Panc1 (cell line): ENCODE measurements at regions of chr5 and their contacts with region 1.

Region 1: GRCh38 chr5:109805883-109806282 is 116.2 kb downstream of the MAN2A1 start:
- DNase-seq: no peak
- ATAC-seq: no peak
- H3K4me3 ChIP-seq: no peak overlapping the region
- H3K27ac ChIP-seq: no peak overlapping the region
- H3K4me1 ChIP-seq: no peaks in the 10 kb centered on the region
- H3K27me3 ChIP-seq: no peaks in the 10 kb centered on the region
- CTCF ChIP-seq: no peak

Region 2: GRCh38 chr5:109743770-109744212 is 62.1 kb before region 1 on chr5:
- CTCF ChIA-PET with region 1: no interaction called
- POLR2A ChIA-PET with region 1: no interaction called
- in situ Hi-C with region 1: no loop called
- intact Hi-C with region 1: no loop called
- DNase-seq: peak; percentile 88
- ATAC-seq: peak; percentile 66
- H3K4me3 ChIP-seq: no peak overlapping the region
- H3K27ac ChIP-seq: 0 out of 2 replicates have a peak overlapping the region, but pooled peaks have one; percentile 29
- H3K4me1 ChIP-seq: peaks cover 12% of the 10 kb centered on the region
- H3K27me3 ChIP-seq: no peaks in the 10 kb centered on the region
- CTCF ChIP-seq: no peak

Region 3: DNA sequence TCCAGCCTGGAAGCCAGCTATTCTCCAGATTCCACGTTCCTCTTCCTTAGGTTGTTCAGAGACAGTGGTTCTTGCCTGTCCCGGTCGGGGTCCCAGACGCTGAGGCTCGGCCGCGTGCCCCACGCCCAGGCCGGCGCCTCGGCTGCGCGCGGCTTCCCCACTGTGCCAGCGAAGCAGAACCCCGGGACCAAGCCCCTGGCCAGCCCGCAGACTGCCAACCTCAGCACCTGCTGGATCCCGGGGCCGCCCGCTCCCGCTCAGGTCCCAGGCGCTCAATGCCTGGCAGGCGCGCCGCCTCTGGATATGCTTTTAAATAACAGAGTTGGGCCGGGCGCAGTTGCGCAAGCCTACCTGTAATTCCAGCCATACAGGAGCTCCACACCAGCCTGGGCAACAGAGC is 79.3 kb after region 1 on chr5:
- CTCF ChIA-PET with region 1: no interaction called
- POLR2A ChIA-PET with region 1: no interaction called
- in situ Hi-C with region 1: no loop called
- intact Hi-C with region 1: loop called (anchors 2 kb)
- DNase-seq: no peak
- ATAC-seq: no peak
- H3K4me3 ChIP-seq: no peak overlapping the region
- H3K27ac ChIP-seq: no peak overlapping the region
- H3K4me1 ChIP-seq: no peaks in the 10 kb centered on the region
- H3K27me3 ChIP-seq: no peaks in the 10 kb centered on the region
- CTCF ChIP-seq: no peak